ENCODE measurements at regions of chr3 and their contacts with region 1.

Region 1: GRCh38 chr3:49454458-49454857 is 15.6 kb upstream of the DAG1 start:
- DNase-seq: peak; percentile 83 to 85
- H3K4me3 ChIP-seq: no peak overlapping the region
- H3K4me3 Mint-ChIP-seq: no peak overlapping the region
- H3K27ac Mint-ChIP-seq: peak overlapping the region; percentile 60
- H3K4me1 ChIP-seq: peaks cover 29% of the 10 kb centered on the region
- H3K4me1 Mint-ChIP-seq: peaks cover 19% of the 10 kb centered on the region
- H3K27me3 ChIP-seq: no peaks in the 10 kb centered on the region
- H3K27me3 Mint-ChIP-seq: no peaks in the 10 kb centered on the region
- CTCF ChIP-seq: peak; percentile 39 to 87

Region 2: GRCh38 chr3:49428697-49429100 is 25.8 kb before region 1 on chr3:
- CTCF ChIA-PET with region 1: interaction called, 10 read pairs
- POLR2A ChIA-PET with region 1: no interaction called
- intact Hi-C with region 1: no loop called
- DNase-seq: no peak
- H3K4me3 ChIP-seq: peak overlapping the region; percentile 65
- H3K4me3 Mint-ChIP-seq: peak overlapping the region; percentile 76
- H3K27ac Mint-ChIP-seq: peak overlapping the region; percentile 96
- H3K4me1 ChIP-seq: no peaks in the 10 kb centered on the region
- H3K4me1 Mint-ChIP-seq: no peaks in the 10 kb centered on the region
- H3K27me3 ChIP-seq: no peaks in the 10 kb centered on the region
- H3K27me3 Mint-ChIP-seq: no peaks in the 10 kb centered on the region
- CTCF ChIP-seq: no peak

Region 3: DNA sequence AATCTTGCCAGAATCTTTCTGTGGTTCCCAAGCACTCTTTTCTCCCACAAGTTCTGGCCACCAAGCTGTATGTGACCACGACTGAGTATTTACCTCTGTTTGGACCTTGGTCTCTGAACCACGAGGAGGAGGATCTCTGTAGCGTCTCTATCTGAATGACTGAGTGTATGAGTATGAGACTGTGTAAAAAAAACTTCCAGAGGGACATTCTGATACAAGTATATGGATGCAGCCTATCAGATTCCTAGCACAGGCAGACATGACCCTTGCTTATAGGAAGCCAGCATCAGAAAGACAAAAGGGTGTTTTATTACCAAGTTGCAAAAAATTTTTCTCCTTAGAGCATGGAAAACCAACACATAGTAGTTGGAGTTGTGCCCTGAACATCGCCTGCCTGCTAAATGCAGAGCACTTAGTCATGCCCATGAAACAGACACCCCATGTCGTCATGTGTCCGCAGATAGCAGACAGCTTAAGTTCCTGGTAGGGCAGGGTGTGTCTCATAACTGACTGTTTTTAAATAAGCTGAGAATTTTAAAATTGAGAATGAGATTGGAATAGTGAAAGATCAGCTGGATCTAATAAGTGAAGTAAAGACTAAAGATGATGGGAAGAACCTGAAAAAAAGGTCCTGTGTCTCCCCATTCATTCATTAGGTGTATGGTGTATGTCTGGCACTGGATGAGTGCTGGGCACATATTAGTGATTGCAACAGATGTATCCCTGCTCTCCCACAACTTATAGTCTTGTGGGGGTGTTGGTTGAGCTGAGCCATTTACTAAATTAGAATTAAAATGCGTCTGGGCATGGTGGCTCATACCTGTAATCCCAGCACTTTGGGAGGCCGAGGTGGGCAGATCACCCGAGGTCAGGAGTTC is 46.5 kb after region 1 on chr3:
- CTCF ChIA-PET with region 1: interaction called, 6 read pairs
- POLR2A ChIA-PET with region 1: no interaction called
- intact Hi-C with region 1: loop called (anchors 2 kb)
- DNase-seq: peak in 1 of 2 experiments; percentile 44
- H3K4me3 ChIP-seq: no peak overlapping the region
- H3K4me3 Mint-ChIP-seq: peak overlapping the region; percentile 11
- H3K27ac Mint-ChIP-seq: peak overlapping the region; percentile 42
- H3K4me1 ChIP-seq: peaks cover 22% of the 10 kb centered on the region
- H3K4me1 Mint-ChIP-seq: peaks cover 25% of the 10 kb centered on the region
- H3K27me3 ChIP-seq: no peaks in the 10 kb centered on the region
- H3K27me3 Mint-ChIP-seq: no peaks in the 10 kb centered on the region
- CTCF ChIP-seq: no peak

Region 4: GRCh38 chr3:49539659-49540560 is 85.5 kb after region 1 on chr3:
- CTCF ChIA-PET with region 1: interaction called, 29 read pairs
- POLR2A ChIA-PET with region 1: interaction called, 7 read pairs
- intact Hi-C with region 1: loop called (anchors 1 kb)
- DNase-seq: peak; percentile 94 to 96
- H3K4me3 ChIP-seq: peak overlapping the region; percentile 49
- H3K4me3 Mint-ChIP-seq: peak overlapping the region; percentile 71
- H3K27ac Mint-ChIP-seq: peak overlapping the region; percentile 69
- H3K4me1 ChIP-seq: no peaks in the 10 kb centered on the region
- H3K4me1 Mint-ChIP-seq: no peaks in the 10 kb centered on the region
- H3K27me3 ChIP-seq: no peaks in the 10 kb centered on the region
- H3K27me3 Mint-ChIP-seq: peaks cover 9% of the 10 kb centered on the region
- CTCF ChIP-seq: peak; percentile 81 to 92

Measured in Caco-2 (cell line).